Activated naive CD8-positive, alpha-beta T cell treated with anti-CD3 and anti-CD28 coated beads, Interleukin-2, amount 10 ng/mL, durations not matched to agents 7 days and 5 days (primary cell): ENCODE measurements at regions of chr10 and their contacts with region 1.

Region 1: GRCh38 chr10:63629363-63630084 is 108.3 kb downstream of the REEP3 start:
- DNase-seq: peak; percentile 82
- ATAC-seq: peak; percentile 60
- H3K4me3 Mint-ChIP-seq: peak overlapping the region; percentile 92
- H3K27ac Mint-ChIP-seq: peak overlapping the region; percentile 92
- H3K4me1 Mint-ChIP-seq: peaks cover 31% of the 10 kb centered on the region
- H3K27me3 Mint-ChIP-seq: peaks cover 4% of the 10 kb centered on the region

Region 2: DNA sequence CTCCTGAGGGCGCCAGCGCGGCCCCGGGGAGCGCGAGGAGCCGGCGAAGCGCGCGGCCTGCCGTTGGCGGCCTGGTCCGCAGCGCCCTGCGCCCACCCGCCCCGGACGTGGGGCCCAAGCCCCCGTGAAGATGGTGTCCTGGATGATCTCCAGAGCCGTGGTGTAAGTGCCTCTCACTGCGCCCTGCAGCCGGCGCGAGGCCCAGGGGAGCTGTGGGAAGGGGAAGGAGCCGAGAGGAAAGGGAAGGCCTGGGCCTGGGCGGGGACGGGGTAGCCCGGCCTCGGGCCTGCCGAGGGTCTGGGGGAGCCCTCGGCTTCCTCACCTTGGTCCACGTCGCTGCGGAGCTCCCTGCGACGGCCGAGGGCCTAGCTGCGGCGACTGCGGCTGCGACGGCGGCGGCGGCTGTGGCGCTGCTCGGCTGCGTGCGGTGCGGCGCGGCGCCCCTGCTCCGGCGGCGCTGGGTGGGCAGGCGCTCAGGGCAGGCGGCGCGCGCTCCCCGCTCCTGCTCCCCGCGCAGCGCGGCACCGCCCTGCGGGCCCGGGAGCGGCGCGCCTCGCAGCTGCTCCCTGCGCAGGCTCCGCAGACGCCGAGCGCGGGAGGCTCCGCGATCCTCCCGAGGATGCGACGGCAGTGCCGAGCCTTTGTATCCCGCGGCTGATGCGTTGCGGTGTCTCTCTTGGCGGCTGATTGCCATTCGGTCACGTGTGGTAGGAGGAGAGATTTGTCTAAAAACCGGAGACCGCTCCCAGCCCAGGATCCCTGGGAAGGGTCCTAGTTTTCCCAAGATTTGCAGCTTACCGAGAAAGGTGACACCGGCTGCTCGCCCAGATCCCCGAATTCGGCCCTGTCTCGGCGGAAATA is 107.9 kb before region 1 on chr10:
- POLR2A ChIA-PET with region 1: interaction called, 17 read pairs
- DNase-seq: peak; percentile 79
- ATAC-seq: peak; percentile 61
- H3K4me3 Mint-ChIP-seq: peak overlapping the region; percentile 80
- H3K27ac Mint-ChIP-seq: peak overlapping the region; percentile 83
- H3K4me1 Mint-ChIP-seq: peaks cover 50% of the 10 kb centered on the region
- H3K27me3 Mint-ChIP-seq: no peaks in the 10 kb centered on the region

Region 3: GRCh38 chr10:63670291-63670898 is 40.9 kb after region 1 on chr10:
- POLR2A ChIA-PET with region 1: no interaction called
- DNase-seq: no peak
- ATAC-seq: no peak
- H3K4me3 Mint-ChIP-seq: no peak overlapping the region
- H3K27ac Mint-ChIP-seq: no peak overlapping the region
- H3K4me1 Mint-ChIP-seq: peaks cover 1% of the 10 kb centered on the region
- H3K27me3 Mint-ChIP-seq: peaks cover 13% of the 10 kb centered on the region